ENCODE measurements at regions of chr15 and their contacts with region 1.

Region 1: GRCh38 chr15:79853458-79854328 is 43.1 kb downstream of the MTHFS start:
- DNase-seq: peak in 4 of 5 donors; percentile 26 to 53 (median 45)
- ATAC-seq: peak; percentile 55 to 95 (median 92)
- H3K4me3 ChIP-seq: no peak overlapping the region
- H3K27ac ChIP-seq: no peak overlapping the region
- H3K4me1 ChIP-seq: peaks cover 0 to 6% (median 0%) of the 10 kb centered on the region in 12 donors
- H3K27me3 ChIP-seq: no peaks in the 10 kb centered on the region
- CTCF ChIP-seq: peak; percentile 79 to 97 (median 90)
- POLR2A ChIP-seq: no peak

Region 2: GRCh38 chr15:79339564-79340314 is 514.0 kb before region 1 on chr15:
- intact Hi-C with region 1: loop called in 2 of 10 experiments (anchors 5 kb)
- DNase-seq: no peak
- ATAC-seq: no peak
- H3K4me3 ChIP-seq: no peak overlapping the region
- H3K27ac ChIP-seq: no peak overlapping the region
- H3K4me1 ChIP-seq: peaks cover 0 to 5% (median 0%) of the 10 kb centered on the region in 12 donors
- H3K27me3 ChIP-seq: no peaks in the 10 kb centered on the region
- CTCF ChIP-seq: peak; percentile 54 to 74 (median 62)
- POLR2A ChIP-seq: no peak

Region 3: GRCh38 chr15:79380755-79381497 is 472.8 kb before region 1 on chr15:
- intact Hi-C with region 1: loop called in 9 of 10 experiments (anchors 1 to 5 kb)
- DNase-seq: peak; percentile 53 to 82 (median 70)
- ATAC-seq: peak; percentile 61 to 88 (median 80)
- H3K4me3 ChIP-seq: no peak overlapping the region
- H3K27ac ChIP-seq: no peak overlapping the region
- H3K4me1 ChIP-seq: no peaks in the 10 kb centered on the region
- H3K27me3 ChIP-seq: no peaks in the 10 kb centered on the region
- CTCF ChIP-seq: peak; percentile 75 to 93 (median 87)
- POLR2A ChIP-seq: no peak

Region 4: GRCh38 chr15:79769069-79769481 is 84.6 kb before region 1 on chr15:
- intact Hi-C with region 1: loop called in 2 of 10 experiments (anchors 5 to 10 kb)
- DNase-seq: no peak
- ATAC-seq: no peak
- H3K4me3 ChIP-seq: no peak overlapping the region
- H3K27ac ChIP-seq: no peak overlapping the region
- H3K4me1 ChIP-seq: no peaks in the 10 kb centered on the region
- H3K27me3 ChIP-seq: peaks cover 0 to 4% (median 0%) of the 10 kb centered on the region in 9 donors
- CTCF ChIP-seq: peak in 8 of 12 donors; percentile 13 to 38 (median 25)
- POLR2A ChIP-seq: no peak

Region 5: GRCh38 chr15:79779746-79780145 is 73.9 kb before region 1 on chr15:
- intact Hi-C with region 1: loop called in 2 of 10 experiments (anchors 5 to 10 kb)
- DNase-seq: no peak
- ATAC-seq: no peak
- H3K4me3 ChIP-seq: no peak overlapping the region
- H3K27ac ChIP-seq: no peak overlapping the region
- H3K4me1 ChIP-seq: no peaks in the 10 kb centered on the region
- H3K27me3 ChIP-seq: peaks cover 0 to 3% (median 0%) of the 10 kb centered on the region in 9 donors
- CTCF ChIP-seq: no peak
- POLR2A ChIP-seq: no peak

Region 6: DNA sequence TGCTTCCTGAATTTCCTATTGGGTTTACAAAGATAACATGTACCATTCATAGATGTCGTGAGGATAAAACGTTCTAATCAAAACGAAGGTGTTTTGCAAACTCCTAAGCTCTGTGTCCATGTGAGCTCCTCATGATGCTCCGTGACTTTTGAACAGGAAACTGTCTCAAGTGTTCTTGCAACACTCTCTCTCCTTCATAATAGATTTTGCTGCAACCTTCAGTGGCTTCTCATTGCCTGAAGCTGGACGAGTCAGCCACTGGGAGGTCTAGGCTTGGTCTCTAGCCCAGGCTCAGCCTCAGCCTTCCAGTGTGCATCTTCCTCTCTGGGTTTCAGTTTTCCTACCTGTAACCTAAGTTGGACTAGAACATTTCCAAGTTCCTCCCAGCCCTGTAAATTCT is 136.0 kb after region 1 on chr15:
- intact Hi-C with region 1: loop called in 1 of 10 experiments (anchors 10 kb)
- DNase-seq: no peak
- ATAC-seq: no peak
- H3K4me3 ChIP-seq: no peak overlapping the region
- H3K27ac ChIP-seq: no peak overlapping the region
- H3K4me1 ChIP-seq: peaks cover 0 to 15% (median 0%) of the 10 kb centered on the region in 12 donors
- H3K27me3 ChIP-seq: no peaks in the 10 kb centered on the region
- CTCF ChIP-seq: no peak
- POLR2A ChIP-seq: no peak

Region 7: DNA sequence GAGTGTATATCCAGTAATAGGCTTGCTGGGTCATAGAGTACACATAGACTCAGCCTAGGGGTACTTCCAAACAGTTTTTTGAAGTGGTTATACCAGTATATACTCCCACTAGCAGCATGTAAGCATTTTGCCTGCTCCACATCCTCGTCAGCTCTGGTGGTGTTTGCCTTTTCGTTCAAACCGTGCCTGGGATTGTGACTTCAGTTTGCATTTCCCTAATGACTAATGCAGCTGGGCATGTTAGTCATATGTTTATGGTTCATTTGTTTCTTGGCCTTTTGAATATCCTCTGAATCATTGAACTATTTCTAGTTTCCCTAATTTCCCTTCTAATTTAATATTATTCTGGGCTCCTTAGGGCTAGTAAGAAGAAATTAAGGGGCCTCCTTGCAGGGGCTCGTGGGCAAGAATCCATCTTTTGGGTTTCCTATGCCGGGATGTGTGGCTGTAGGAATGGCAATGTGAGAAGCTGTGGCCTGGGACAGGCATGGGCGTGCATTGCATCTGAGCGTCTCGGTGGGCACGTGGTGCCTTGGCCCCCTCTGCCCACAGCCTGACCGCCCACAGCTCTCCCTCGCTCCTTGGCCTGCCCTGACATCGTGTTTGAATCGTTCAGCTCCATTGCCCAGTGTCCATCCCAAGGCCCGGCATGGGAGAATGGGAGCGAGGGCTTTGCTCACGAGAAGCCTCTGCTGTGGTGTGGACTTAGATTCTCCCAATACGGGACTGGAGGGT is 325.5 kb after region 1 on chr15:
- intact Hi-C with region 1: loop called in 1 of 10 experiments (anchors 5 kb)
- DNase-seq: no peak
- ATAC-seq: no peak
- H3K4me3 ChIP-seq: no peak overlapping the region
- H3K27ac ChIP-seq: no peak overlapping the region
- H3K4me1 ChIP-seq: peaks cover 0 to 18% (median 8%) of the 10 kb centered on the region in 12 donors
- H3K27me3 ChIP-seq: no peaks in the 10 kb centered on the region
- CTCF ChIP-seq: no peak
- POLR2A ChIP-seq: no peak

Region 8: GRCh38 chr15:80234883-80235282 is 381.2 kb after region 1 on chr15:
- intact Hi-C with region 1: no loop called
- DNase-seq: no peak
- ATAC-seq: no peak
- H3K4me3 ChIP-seq: no peak overlapping the region
- H3K27ac ChIP-seq: no peak overlapping the region
- H3K4me1 ChIP-seq: no peaks in the 10 kb centered on the region
- H3K27me3 ChIP-seq: peaks cover 0 to 14% (median 3%) of the 10 kb centered on the region in 9 donors
- CTCF ChIP-seq: peak in 6 of 12 donors; percentile 17 to 45 (median 24)
- POLR2A ChIP-seq: no peak